CD8-positive, alpha-beta T cell (primary cell): ENCODE measurements at regions of chr4 and their contacts with region 1.

Region 1: GRCh38 chr4:124322234-124323065 is 390.1 kb downstream of the ANKRD50 start:
- DNase-seq: peak in 2 of 9 experiments; percentile 13 to 23
- ATAC-seq: no peak
- H3K4me3 ChIP-seq: no peak overlapping the region
- H3K4me3 Mint-ChIP-seq: no peak overlapping the region
- H3K27ac ChIP-seq: no peak overlapping the region
- H3K27ac Mint-ChIP-seq: no peak overlapping the region
- H3K4me1 ChIP-seq: no peaks in the 10 kb centered on the region
- H3K4me1 Mint-ChIP-seq: no peaks in the 10 kb centered on the region
- H3K27me3 ChIP-seq: no peaks in the 10 kb centered on the region
- H3K27me3 Mint-ChIP-seq: peaks cover 2% of the 10 kb centered on the region
- CTCF ChIP-seq: peak; percentile 74

Region 2: DNA sequence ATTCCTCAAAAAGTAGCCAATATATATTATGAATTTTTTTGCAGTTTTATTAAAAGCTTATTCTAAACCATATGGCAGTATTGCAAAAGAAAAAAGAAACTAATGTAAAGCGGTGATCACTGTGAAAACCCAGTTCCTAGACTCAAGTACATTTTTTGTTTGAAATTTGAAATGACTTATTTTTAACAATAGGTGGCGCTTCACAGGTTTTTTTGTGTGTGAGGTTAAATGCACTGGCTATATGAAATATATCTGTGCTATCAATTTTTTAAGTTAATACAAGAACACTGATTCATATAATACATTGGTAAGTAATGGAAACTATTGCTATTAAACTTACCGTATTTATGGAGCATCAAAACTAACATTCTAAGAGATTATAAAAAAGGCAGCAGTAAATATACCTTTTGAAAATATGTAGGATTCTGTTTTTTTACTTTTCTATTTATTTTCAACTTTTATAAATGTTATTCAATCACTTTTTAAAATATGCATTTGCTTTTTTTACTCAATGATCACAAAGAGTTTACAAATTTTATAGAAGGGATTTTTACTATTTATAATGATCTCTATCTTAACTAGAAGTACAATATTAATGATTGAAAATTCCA is 931.5 kb before region 1 on chr4:
- CTCF ChIA-PET with region 1: no interaction called
- POLR2A ChIA-PET with region 1: no interaction called
- intact Hi-C with region 1: loop called in 1 of 2 experiments (anchors 2 kb)
- DNase-seq: peak in 2 of 9 experiments; percentile 41 to 52
- ATAC-seq: peak; percentile 40
- H3K4me3 ChIP-seq: no peak overlapping the region
- H3K4me3 Mint-ChIP-seq: no peak overlapping the region
- H3K27ac ChIP-seq: no peak overlapping the region
- H3K27ac Mint-ChIP-seq: no peak overlapping the region
- H3K4me1 ChIP-seq: no peaks in the 10 kb centered on the region
- H3K4me1 Mint-ChIP-seq: no peaks in the 10 kb centered on the region
- H3K27me3 ChIP-seq: no peaks in the 10 kb centered on the region
- H3K27me3 Mint-ChIP-seq: no peaks in the 10 kb centered on the region
- CTCF ChIP-seq: peak; percentile 76